Lower leg skin (tissue), 4 donors: ENCODE measurements at regions of chr16 and their contacts with region 1.

Region 1: DNA sequence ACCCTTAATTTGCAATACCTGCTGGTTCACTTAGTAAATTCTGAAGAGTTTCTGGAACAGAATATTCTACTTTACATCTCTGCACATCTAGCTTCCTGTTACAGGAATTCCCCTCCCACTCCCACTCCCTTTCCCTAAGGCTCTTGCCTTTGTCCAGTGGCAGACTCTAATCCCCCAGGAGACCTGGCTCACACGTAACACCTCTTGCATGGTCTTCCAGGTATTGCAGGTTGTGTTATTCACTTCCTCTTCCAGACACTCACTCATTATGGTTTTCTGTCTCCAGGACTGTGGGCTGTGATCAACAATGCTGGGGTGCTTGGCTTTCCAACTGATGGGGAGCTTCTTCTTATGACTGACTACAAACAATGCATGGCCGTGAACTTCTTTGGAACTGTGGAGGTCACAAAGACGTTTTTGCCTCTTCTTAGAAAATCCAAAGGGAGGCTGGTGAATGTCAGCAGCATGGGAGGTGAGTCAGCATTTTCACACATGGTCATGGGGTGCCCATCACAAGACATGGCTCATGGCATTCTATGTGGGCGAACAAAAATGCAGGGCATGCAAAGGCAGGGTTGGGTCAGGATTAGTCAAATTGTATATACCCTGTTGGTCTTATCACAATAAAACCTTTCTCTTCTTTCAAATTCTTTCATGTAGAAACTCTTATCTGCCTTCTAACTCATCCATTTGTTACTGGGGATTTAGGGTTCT is 35.8 kb downstream of the HSD17B2 start:
- DNase-seq: no peak
- H3K4me3 ChIP-seq: no peak overlapping the region
- CTCF ChIP-seq: no peak
- POLR2A ChIP-seq: no peak

Region 2: GRCh38 chr16:84048270-84048669 is 1977.5 kb after region 1 on chr16:
- intact Hi-C with region 1: loop called (anchors 5 kb)
- DNase-seq: no peak
- H3K4me3 ChIP-seq: no peak overlapping the region
- CTCF ChIP-seq: no peak
- POLR2A ChIP-seq: no peak